SK-N-SH (cell line): ENCODE measurements at regions of chr9 and their contacts with region 1.

Region 1: DNA sequence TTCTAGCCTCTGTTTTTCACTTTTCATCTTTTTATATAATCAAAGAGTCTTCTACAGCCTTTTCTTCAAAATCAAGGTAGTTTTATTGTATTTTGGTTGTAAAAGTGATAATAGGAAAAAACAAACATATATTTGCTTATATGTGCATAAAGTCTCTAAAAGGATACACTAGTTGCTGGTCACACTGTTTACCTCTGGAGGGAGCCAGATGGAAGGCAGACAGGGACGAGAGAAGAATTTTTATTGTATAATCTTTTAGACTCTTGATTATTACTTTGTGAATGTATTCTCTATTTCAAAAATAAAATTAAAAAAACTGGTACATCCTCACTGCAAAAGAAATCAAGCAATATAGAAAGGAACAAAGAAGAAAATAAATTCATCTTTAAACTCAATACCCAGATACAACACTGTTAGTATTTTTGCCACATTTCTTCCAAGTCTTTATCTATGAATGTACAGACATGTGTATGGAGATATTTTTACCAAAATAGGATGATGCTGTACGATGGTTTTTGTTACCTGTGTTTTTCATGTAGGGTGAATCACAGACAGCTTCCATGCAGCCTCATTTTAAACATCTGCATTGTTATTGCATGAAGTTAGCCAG is 6.1 kb upstream of the RNF183 start:
- DNase-seq: peak; percentile 69
- H3K4me3 ChIP-seq: no peak overlapping the region; a peak in 1 of 4 replicates
- H3K27ac ChIP-seq: no peak overlapping the region
- H3K4me1 ChIP-seq: peaks cover 0 to 3% of the 10 kb centered on the region in 2 experiments; a peak in 1 of 4 replicates
- H3K27me3 ChIP-seq: no peaks in the 10 kb centered on the region
- CTCF ChIP-seq: peak; percentile 85
- EP300 ChIP-seq: no peak
- RAD21 ChIP-seq: peak; percentile 95

Region 2: GRCh38 chr9:113296796-113297558 is 12.3 kb before region 1 on chr9:
- CTCF ChIA-PET with region 1: interaction called, 14 read pairs
- POLR2A ChIA-PET with region 1: no interaction called
- DNase-seq: no peak
- H3K4me3 ChIP-seq: no peak overlapping the region
- H3K27ac ChIP-seq: no peak overlapping the region
- H3K4me1 ChIP-seq: no peaks in the 10 kb centered on the region
- H3K27me3 ChIP-seq: no peaks in the 10 kb centered on the region
- CTCF ChIP-seq: no peak
- EP300 ChIP-seq: no peak
- RAD21 ChIP-seq: no peak

Region 3: GRCh38 chr9:113401027-113401792 is 91.9 kb after region 1 on chr9 and contains the start of gene ALAD:
- CTCF ChIA-PET with region 1: interaction called, 15 read pairs
- POLR2A ChIA-PET with region 1: no interaction called
- DNase-seq: peak; percentile 100
- H3K4me3 ChIP-seq: peak within 1 kb of the TSS; percentile 85 to 98
- H3K27ac ChIP-seq: peak within 1 kb of the TSS; percentile 46 to 62; a peak in 3 of 4 replicates
- H3K4me1 ChIP-seq: peaks cover 8 to 10% of the 10 kb centered on the region in 2 experiments; a peak in 1 of 4 replicates
- H3K27me3 ChIP-seq: no peaks in the 10 kb centered on the region
- CTCF ChIP-seq: peak; percentile 93
- EP300 ChIP-seq: no peak
- RAD21 ChIP-seq: peak; percentile 69
- polyA plus RNA-seq, gene ALAD: 10.7 and 11.8 TPM in 2 replicates

Region 4: DNA sequence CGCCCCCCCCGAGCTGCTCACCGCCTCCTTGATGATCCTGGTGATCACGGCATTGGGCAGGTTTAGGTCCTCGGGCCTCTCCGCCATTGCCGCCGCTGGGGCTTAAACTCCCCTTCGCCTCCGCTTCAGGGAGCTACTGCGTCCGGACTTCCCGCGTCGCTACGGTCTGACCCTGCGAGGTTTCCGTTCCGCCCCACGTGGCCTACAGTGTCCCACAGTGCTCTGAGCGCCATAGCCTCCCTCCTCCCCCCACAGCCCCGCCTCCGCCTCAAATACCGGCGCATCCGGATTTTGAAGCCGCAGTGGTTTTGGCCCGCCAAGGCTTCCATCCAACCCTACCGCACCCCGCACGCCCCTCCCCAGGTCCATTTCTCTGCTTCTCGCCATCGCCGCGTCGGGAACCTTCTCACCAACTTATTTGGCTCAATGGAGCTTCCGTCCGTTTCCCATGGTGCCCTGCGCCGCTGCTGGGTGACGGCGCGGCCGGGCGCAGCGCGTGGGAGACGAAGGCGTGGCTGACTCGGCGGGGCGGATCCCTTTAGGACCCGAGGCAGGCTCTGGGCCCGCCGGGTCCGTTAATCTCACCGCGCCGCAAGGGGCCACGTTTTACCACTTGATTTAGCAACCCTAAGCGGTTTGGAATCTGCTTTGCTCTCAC is 101.0 kb after region 1 on chr9 and contains the starts of genes C9orf43 and POLE3:
- CTCF ChIA-PET with region 1: interaction called, 22 read pairs
- POLR2A ChIA-PET with region 1: no interaction called
- DNase-seq: peak; percentile 94
- H3K4me3 ChIP-seq: peak within 1 kb of the TSS; percentile 81 to 88
- H3K27ac ChIP-seq: peak within 1 kb of the TSS; percentile 96
- H3K4me1 ChIP-seq: peaks cover 0 to 7% of the 10 kb centered on the region in 2 experiments; a peak in 1 of 4 replicates
- H3K27me3 ChIP-seq: no peaks in the 10 kb centered on the region
- CTCF ChIP-seq: 0 out of 2 replicates have a peak, but pooled peaks have one; percentile 12
- EP300 ChIP-seq: peak; percentile 7 to 24; a peak in 1 of 4 replicates
- RAD21 ChIP-seq: no peak
- polyA plus RNA-seq, gene C9orf43: 0.47 and 0.58 TPM in 2 replicates
- polyA plus RNA-seq, gene POLE3: 40.1 and 48.3 TPM in 2 replicates